Gastrocnemius medialis (tissue), 4 donors: ENCODE measurements at regions of chr16 and their contacts with region 1.

Region 1: DNA sequence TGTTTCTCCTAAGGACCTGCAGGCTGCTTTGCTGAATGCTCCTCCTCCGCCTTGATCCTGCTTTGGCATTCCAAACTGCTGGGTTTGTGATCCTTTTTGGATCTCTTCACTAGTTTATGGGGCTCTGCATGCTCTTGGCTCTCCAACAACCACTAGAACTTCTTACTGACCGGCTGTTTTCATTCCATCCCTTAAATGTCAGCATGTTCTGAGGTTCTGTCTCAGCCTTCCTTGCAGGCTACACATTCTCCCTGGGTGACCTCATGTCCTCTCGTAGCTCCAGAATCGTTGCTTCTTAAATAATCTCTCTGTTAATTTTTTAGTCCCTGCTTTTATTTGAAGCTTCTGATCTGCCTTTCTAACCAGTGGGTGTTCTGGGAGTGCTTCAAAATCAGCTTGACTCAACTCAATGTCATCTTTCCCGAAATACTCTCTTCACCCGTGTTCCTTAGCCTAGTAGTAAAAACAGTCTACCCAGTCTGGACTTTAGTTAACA is 119.0 kb upstream of the HS3ST2 start:
- DNase-seq: peak in 1 of 2 donors; percentile 27
- ATAC-seq: peak; percentile 51 to 63
- H3K4me3 ChIP-seq: no peak overlapping the region
- H3K27ac ChIP-seq: peak overlapping the region in 3 of 4 donors; percentile 55 to 74 (median 62)
- H3K4me1 ChIP-seq: peaks cover 17 to 24% of the 10 kb centered on the region in 2 donors
- H3K27me3 ChIP-seq: no peaks in the 10 kb centered on the region
- CTCF ChIP-seq: no peak
- POLR2A ChIP-seq: no peak

Region 2: DNA sequence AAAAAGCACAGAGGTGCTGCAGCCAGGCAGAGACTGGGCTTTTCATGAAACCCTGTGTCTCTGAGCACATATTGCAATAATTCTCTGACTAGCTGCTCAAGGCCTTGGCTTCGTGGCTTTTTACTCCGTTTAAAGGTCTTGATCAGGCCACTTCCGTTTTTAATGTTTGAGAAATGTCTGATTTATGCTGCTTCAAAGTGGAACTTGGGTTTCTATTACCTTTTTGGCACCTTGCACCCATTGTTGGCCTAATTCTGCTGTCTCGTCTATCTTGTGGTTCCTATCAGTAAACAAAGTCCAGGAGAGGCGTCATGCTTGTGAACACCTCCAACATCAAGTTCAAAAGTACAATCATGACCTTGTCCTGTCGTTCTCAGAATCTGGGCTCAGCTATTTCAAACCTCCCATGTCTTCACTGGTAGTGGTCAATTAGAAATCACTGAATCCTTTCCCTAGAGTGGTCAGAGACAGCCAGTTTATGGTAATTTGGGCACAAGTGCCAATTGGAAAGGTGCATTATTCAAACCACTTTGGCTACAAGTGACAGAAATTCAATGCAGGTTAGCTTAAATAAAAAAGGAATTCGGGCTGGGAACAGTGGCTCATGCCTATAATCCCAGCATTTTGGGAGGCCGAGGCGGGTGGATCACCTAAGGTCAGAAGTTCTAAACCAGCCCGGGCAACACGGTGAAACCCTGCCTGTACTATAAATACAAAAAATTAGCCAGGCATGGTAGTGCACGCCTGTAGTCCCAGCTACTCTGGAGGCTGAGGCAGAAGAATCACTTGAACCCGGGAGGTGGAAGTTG is 1128.9 kb before region 1 on chr16:
- in situ Hi-C with region 1: no loop called
- intact Hi-C with region 1: loop called (anchors 5 kb)
- DNase-seq: no peak
- ATAC-seq: peak; percentile 18 to 40
- H3K4me3 ChIP-seq: no peak overlapping the region
- H3K27ac ChIP-seq: peak overlapping the region in 2 of 4 donors; percentile 19 to 57
- H3K4me1 ChIP-seq: peaks cover 15 to 21% of the 10 kb centered on the region in 2 donors
- H3K27me3 ChIP-seq: no peaks in the 10 kb centered on the region
- CTCF ChIP-seq: no peak
- POLR2A ChIP-seq: no peak

Region 3: DNA sequence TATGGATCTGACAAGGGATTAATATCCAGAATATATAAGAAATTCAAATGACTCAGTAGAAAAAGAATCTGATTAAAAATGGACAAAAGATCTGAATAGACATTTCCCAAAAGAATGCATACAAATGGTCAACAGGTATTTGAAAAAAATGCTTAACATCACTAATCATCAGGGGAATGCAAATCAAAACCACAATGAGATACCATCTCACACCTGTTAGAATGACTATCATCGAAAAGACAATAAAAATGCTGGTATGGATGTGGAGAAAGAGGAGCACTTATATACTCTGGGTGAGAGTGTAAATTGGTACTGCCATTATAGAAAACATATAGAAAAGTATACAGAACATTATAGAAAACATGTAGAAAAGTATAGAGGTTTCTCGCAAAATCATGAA is 102.6 kb after region 1 on chr16:
- in situ Hi-C with region 1: no loop called
- intact Hi-C with region 1: no loop called
- DNase-seq: no peak
- ATAC-seq: no peak
- H3K4me3 ChIP-seq: no peak overlapping the region
- H3K27ac ChIP-seq: no peak overlapping the region
- H3K4me1 ChIP-seq: no peaks in the 10 kb centered on the region
- H3K27me3 ChIP-seq: no peaks in the 10 kb centered on the region
- CTCF ChIP-seq: no peak
- POLR2A ChIP-seq: no peak